A673 (cell line): ENCODE measurements at regions of chr16 and their contacts with region 1.

Region 1: GRCh38 chr16:30844671-30845449 is 49.0 kb downstream of the BCL7C start:
- DNase-seq: peak; percentile 92
- H3K4me3 ChIP-seq: no peak overlapping the region
- H3K27ac ChIP-seq: no peak overlapping the region
- H3K4me1 ChIP-seq: no peaks in the 10 kb centered on the region
- H3K27me3 ChIP-seq: no peaks in the 10 kb centered on the region
- CTCF ChIP-seq: peak; percentile 86

Region 2: GRCh38 chr16:30893744-30894539 is 49.1 kb after region 1 on chr16 and contains the start of gene BCL7C:
- CTCF ChIA-PET with region 1: interaction called, 4 read pairs
- POLR2A ChIA-PET with region 1: no interaction called
- intact Hi-C with region 1: loop called (anchors 2 kb)
- DNase-seq: peak; percentile 91
- H3K4me3 ChIP-seq: peak within 1 kb of the TSS; percentile 79
- H3K27ac ChIP-seq: peak within 1 kb of the TSS; percentile 84
- H3K4me1 ChIP-seq: peaks cover 16% of the 10 kb centered on the region
- H3K27me3 ChIP-seq: no peaks in the 10 kb centered on the region
- CTCF ChIP-seq: peak; percentile 46
- total RNA-seq, gene BCL7C: 28.2 and 34.7 TPM in 2 replicates

Region 3: GRCh38 chr16:30902029-30902972 is 57.4 kb after region 1 on chr16:
- CTCF ChIA-PET with region 1: interaction called, 18 read pairs
- POLR2A ChIA-PET with region 1: no interaction called
- intact Hi-C with region 1: loop called (anchors 2 kb)
- DNase-seq: peak; percentile 73
- H3K4me3 ChIP-seq: peak overlapping the region; percentile 42
- H3K27ac ChIP-seq: peak overlapping the region; percentile 82
- H3K4me1 ChIP-seq: peaks cover 22% of the 10 kb centered on the region
- H3K27me3 ChIP-seq: no peaks in the 10 kb centered on the region
- CTCF ChIP-seq: no peak

Region 4: GRCh38 chr16:30941600-30942425 is 97.0 kb after region 1 on chr16:
- CTCF ChIA-PET with region 1: interaction called, 6 read pairs
- POLR2A ChIA-PET with region 1: no interaction called
- intact Hi-C with region 1: loop called (anchors 2 kb)
- DNase-seq: peak; percentile 70
- H3K4me3 ChIP-seq: no peak overlapping the region
- H3K27ac ChIP-seq: peak overlapping the region; percentile 16
- H3K4me1 ChIP-seq: no peaks in the 10 kb centered on the region
- H3K27me3 ChIP-seq: no peaks in the 10 kb centered on the region
- CTCF ChIP-seq: peak; percentile 90